HEK293 (cell line): ENCODE measurements at regions of chrX and their contacts with region 1.

Region 1: GRCh38 chrX:152830312-152831305 is at the starts of genes CETN2 and NSDHL:
- H3K4me3 ChIP-seq: peak within 1 kb of the TSS; percentile 60
- H3K27ac ChIP-seq: peak within 1 kb of the TSS; percentile 44; the same call in 1 of the 2 replicates
- H3K4me1 ChIP-seq: no peaks in the 10 kb centered on the region
- CTCF ChIP-seq: no peak

Region 2: GRCh38 chrX:152637649-152638442 is 192.8 kb before region 1 on chrX and contains the start of gene GABRQ:
- CTCF ChIA-PET with region 1: no interaction called
- POLR2A ChIA-PET with region 1: interaction called, 13 read pairs
- H3K4me3 ChIP-seq: peak within 1 kb of the TSS; percentile 49
- H3K27ac ChIP-seq: no peak within 1 kb of the TSS
- H3K4me1 ChIP-seq: no peaks in the 10 kb centered on the region
- CTCF ChIP-seq: no peak